Activated B cell treated with CpG ODN at 0.5 μM for 24 hours (primary cell): ENCODE measurements at regions of chrX and their contacts with region 1.

Region 1: GRCh38 chrX:23782863-23783568 is at the start of gene SAT1:
- DNase-seq: peak; percentile 78
- ATAC-seq: peak; percentile 85
- H3K4me3 Mint-ChIP-seq: peak within 1 kb of the TSS; percentile 94
- H3K27ac Mint-ChIP-seq: peak within 1 kb of the TSS; percentile 95
- H3K4me1 Mint-ChIP-seq: peaks cover 43% of the 10 kb centered on the region
- H3K27me3 Mint-ChIP-seq: no peaks in the 10 kb centered on the region
- CTCF ChIP-seq: no peak
- total RNA-seq, gene SAT1: 75.1 and 88.9 TPM in 2 replicates

Region 2: DNA sequence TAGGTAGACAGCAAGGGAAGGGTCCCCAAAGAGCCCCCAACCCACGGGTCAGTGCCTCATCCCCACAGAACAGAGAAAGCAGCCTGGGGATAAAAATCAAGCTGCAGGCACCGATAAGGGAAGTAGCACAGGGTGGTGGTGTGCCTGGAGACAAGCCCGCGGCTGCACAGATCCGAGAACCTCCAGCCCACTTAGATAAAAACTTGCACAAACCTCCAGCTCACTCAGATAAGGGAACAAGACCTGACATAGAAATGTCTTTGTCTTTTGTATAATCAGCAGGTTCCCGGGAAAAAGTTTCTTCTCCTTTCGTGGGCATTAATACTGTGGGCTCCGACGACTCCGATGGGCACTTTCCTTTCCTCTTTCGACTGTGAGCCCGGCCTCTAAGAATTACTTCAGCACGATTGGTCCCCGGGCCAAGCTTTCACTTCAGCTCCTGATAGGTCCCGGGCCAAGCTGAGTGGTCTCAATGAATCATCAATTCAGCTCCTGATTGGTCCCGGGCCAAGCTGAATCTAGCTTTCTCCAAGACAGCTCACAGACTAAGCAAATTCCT is 83.3 kb before region 1 on chrX:
- CTCF ChIA-PET with region 1: interaction called, 3 read pairs
- POLR2A ChIA-PET with region 1: interaction called, 12 read pairs
- intact Hi-C with region 1: loop called (anchors 1 kb)
- DNase-seq: peak; percentile 14
- ATAC-seq: peak; percentile 88
- H3K4me3 Mint-ChIP-seq: peak overlapping the region; percentile 81
- H3K27ac Mint-ChIP-seq: peak overlapping the region; percentile 56
- H3K4me1 Mint-ChIP-seq: peaks cover 3% of the 10 kb centered on the region
- H3K27me3 Mint-ChIP-seq: no peaks in the 10 kb centered on the region
- CTCF ChIP-seq: no peak

Region 3: DNA sequence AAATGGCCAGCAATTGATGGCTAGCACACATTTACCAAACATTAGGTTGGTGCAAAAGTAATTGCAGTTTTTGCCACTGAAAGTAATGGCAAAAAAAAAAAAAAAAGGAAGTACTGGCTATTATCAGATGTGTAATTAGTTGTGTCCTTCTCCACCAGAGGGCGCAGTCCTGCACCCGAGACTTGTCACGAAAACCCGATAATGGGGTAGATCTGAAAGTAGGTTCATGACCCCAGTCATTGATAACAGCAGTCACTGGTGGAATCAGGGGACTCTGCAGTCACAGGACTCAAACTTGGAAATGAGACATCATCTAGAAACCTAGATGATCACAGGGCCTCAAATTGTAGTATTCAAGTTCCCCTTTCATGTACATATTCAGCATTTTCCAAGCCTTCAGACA is 26.9 kb before region 1 on chrX:
- CTCF ChIA-PET with region 1: interaction called, 4 read pairs
- POLR2A ChIA-PET with region 1: no interaction called
- intact Hi-C with region 1: loop called (anchors 1 kb)
- DNase-seq: peak; percentile 18
- ATAC-seq: peak; percentile 64
- H3K4me3 Mint-ChIP-seq: no peak overlapping the region
- H3K27ac Mint-ChIP-seq: peak overlapping the region; percentile 35
- H3K4me1 Mint-ChIP-seq: peaks cover 3% of the 10 kb centered on the region
- H3K27me3 Mint-ChIP-seq: no peaks in the 10 kb centered on the region
- CTCF ChIP-seq: peak; percentile 26

Region 4: DNA sequence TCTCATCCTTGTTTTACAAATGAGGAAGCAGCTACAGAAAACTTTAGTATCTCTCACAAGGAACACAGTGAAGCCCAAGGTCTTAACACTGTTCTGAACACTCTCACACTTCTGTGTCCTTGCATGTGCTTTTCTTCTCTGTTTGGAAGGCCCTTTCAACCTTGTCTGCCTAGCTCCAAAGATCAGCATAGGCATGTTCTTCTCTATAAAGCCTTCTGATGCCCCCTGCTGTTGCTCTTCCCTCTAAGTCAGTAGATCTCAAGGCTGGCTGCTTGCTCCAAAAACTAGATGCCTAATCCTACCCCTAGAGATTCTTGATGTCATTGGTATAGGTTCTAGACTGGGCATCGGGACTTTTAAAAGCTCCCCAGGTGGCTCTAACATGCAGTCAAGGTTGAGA is 118.8 kb after region 1 on chrX:
- CTCF ChIA-PET with region 1: interaction called, 56 read pairs
- POLR2A ChIA-PET with region 1: interaction called, 55 read pairs
- intact Hi-C with region 1: loop called (anchors 1 kb)
- DNase-seq: no peak
- ATAC-seq: peak; percentile 87
- H3K4me3 Mint-ChIP-seq: no peak overlapping the region
- H3K27ac Mint-ChIP-seq: no peak overlapping the region
- H3K4me1 Mint-ChIP-seq: peaks cover 4% of the 10 kb centered on the region
- H3K27me3 Mint-ChIP-seq: no peaks in the 10 kb centered on the region
- CTCF ChIP-seq: no peak

Region 5: DNA sequence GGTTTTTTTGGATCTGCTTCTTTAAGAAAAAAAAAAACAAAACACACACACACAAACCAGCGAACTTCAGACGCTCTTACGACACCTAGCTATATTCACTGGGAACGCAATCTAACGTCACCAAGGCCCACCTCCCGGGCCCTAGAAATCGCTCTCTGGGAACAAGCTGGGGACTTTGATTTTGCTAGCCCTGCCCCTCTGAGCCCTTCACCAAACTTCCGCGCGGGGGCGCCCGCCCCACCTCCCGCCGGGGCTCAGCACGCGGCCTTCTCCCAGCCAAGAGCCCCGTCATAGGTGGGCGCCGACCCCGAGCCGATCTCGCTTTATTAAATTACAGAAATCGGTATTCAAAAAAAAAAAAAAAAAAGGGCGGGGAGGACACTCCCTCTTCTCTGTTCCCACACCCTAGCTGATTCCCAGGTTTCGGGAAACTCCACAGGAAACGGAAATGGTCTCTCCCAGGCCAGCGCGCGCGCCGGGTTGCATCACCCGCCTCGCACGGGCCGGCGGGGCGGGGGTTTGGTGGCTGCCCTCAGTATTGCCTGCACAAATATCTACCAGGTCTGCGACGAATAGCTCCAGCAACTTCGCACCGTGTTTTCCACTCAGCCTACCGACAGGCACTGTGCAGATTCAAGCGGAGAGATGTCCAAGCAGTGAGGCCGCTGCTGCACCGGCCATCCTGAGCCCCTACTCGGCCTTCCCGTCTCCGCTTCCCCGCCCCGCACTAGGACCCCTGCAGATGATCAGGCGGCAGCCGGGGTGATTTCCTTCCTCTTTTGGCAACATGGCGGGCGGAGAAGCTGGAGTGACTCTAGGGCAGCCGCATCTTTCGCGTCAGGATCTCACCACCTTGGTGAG is 271.4 kb after region 1 on chrX and contains the start of gene EIF2S3:
- CTCF ChIA-PET with region 1: interaction called, 8 read pairs
- POLR2A ChIA-PET with region 1: interaction called, 30 read pairs
- intact Hi-C with region 1: loop called (anchors 1 kb)
- DNase-seq: peak; percentile 73
- ATAC-seq: peak; percentile 80
- H3K4me3 Mint-ChIP-seq: no peak within 1 kb of the TSS
- H3K27ac Mint-ChIP-seq: peak within 1 kb of the TSS; percentile 99
- H3K4me1 Mint-ChIP-seq: peaks cover 4% of the 10 kb centered on the region
- H3K27me3 Mint-ChIP-seq: no peaks in the 10 kb centered on the region
- CTCF ChIP-seq: no peak
- total RNA-seq, gene EIF2S3: 281 and 314 TPM in 2 replicates